A673 (cell line): ENCODE measurements at regions of chr6 and their contacts with region 1.

Region 1: GRCh38 chr6:159540152-159540551 is 152.9 kb downstream of the SOD2 start:
- DNase-seq: peak; percentile 30
- H3K4me3 ChIP-seq: no peak overlapping the region
- H3K27ac ChIP-seq: no peak overlapping the region
- H3K4me1 ChIP-seq: no peaks in the 10 kb centered on the region
- H3K27me3 ChIP-seq: peaks cover 8% of the 10 kb centered on the region
- CTCF ChIP-seq: peak; percentile 52

Region 2: DNA sequence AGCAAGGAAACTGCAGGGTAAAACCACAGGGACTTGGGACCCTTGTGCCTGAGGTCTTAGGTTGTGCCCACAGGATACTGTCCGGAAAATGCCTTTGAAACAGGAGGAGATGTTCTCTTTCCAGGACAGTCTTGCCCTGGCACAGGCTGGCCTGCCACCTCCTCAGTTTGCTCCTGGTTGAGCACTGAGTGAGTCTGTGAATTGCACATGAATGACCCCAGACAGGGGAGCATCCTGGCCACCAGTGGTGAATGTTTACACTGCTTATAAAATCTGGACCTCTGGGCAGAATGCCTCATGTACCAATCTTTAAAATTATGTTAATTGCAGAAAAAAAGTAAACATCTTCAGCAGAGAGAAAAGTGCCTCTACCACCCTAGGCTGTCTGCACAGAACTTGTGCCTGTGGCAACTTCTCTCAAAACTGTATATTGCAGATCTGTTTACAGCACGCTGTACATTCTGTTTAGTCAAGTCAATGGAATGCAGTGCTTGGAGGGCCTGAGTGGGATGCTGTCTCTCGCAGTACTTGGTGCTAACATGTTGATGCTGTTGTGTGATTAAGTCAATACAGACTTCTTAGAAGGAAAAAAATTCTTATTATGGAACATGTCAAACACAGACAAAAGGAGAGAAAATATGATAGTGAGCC is 89.2 kb before region 1 on chr6:
- CTCF ChIA-PET with region 1: no interaction called
- POLR2A ChIA-PET with region 1: no interaction called
- intact Hi-C with region 1: no loop called
- DNase-seq: no peak
- H3K4me3 ChIP-seq: no peak overlapping the region
- H3K27ac ChIP-seq: no peak overlapping the region
- H3K4me1 ChIP-seq: no peaks in the 10 kb centered on the region
- H3K27me3 ChIP-seq: no peaks in the 10 kb centered on the region
- CTCF ChIP-seq: no peak

Region 3: DNA sequence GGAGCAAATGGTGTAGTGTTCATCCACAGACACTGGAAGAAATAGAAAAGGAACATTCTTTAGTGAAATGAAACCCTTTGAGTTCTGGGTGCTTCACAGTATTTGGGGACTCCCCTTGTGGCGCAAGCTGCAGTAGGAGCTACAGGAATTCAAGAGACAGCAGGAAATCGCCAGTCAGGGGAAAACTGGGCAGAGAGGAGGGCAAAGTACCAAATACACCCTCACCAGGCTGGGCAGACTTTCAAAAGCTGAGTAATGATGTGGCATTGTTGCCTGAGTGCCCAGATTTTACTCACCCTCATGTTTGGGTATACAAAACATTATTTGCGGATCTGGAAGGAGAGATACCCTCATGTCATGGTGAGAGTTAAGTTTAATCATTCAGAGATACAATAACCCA is 55.0 kb after region 1 on chr6:
- CTCF ChIA-PET with region 1: interaction called, 16 read pairs
- POLR2A ChIA-PET with region 1: no interaction called
- intact Hi-C with region 1: no loop called
- DNase-seq: no peak
- H3K4me3 ChIP-seq: no peak overlapping the region
- H3K27ac ChIP-seq: no peak overlapping the region
- H3K4me1 ChIP-seq: no peaks in the 10 kb centered on the region
- H3K27me3 ChIP-seq: no peaks in the 10 kb centered on the region
- CTCF ChIP-seq: no peak